ENCODE measurements at regions of chr13 and their contacts with region 1.

Region 1: DNA sequence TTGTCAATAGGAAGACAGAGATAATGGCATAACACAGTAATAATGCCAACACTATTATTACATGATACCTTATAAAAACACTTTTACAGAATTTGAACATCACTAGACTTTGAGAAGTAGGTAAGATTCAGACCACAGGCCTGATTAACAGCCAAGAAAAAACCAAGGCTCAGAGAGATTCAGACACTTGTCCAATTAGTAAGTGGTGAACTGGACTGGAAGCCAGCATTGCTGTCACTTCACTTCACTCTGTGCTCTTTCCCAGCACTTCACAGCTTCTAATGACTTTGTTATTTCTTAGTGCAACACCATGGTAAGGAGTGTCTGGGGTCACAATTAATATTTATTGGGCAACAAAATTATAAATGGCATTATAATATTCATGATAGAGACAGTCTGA is 91.9 kb downstream of the TRPC4 start:
- DNase-seq: no peak
- ATAC-seq: no peak
- H3K4me3 ChIP-seq: no peak overlapping the region
- H3K4me3 Mint-ChIP-seq: no peak overlapping the region
- H3K27ac ChIP-seq: no peak overlapping the region
- H3K27ac Mint-ChIP-seq: no peak overlapping the region
- H3K4me1 ChIP-seq: no peaks in the 10 kb centered on the region
- H3K4me1 Mint-ChIP-seq: no peaks in the 10 kb centered on the region
- H3K27me3 ChIP-seq: no peaks in the 10 kb centered on the region
- H3K27me3 Mint-ChIP-seq: no peaks in the 10 kb centered on the region

Region 2: DNA sequence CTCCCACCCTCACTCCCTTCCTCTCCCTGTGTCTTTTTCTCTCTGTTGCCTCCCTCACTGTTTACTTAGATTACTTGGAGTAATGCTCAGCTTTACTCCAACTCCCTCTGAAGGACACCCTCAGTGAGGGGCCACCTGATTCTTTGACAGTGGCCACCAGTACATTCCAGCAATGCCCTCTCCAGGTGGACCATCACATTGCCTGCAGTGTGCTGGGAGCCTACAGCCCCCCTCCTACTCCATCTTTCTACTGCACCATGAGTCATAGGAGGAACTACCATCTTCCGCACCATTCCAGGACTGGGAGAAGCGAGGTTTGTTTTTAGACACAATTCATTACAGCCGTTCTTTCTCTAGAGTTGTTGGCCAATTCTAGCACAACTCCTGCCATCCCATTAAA is 82.5 kb before region 1 on chr13:
- CTCF ChIA-PET with region 1: no interaction called
- POLR2A ChIA-PET with region 1: no interaction called
- DNase-seq: no peak
- ATAC-seq: no peak
- H3K4me3 ChIP-seq: no peak overlapping the region
- H3K4me3 Mint-ChIP-seq: no peak overlapping the region
- H3K27ac ChIP-seq: no peak overlapping the region
- H3K27ac Mint-ChIP-seq: no peak overlapping the region
- H3K4me1 ChIP-seq: no peaks in the 10 kb centered on the region
- H3K4me1 Mint-ChIP-seq: no peaks in the 10 kb centered on the region
- H3K27me3 ChIP-seq: no peaks in the 10 kb centered on the region
- H3K27me3 Mint-ChIP-seq: no peaks in the 10 kb centered on the region

Region 3: DNA sequence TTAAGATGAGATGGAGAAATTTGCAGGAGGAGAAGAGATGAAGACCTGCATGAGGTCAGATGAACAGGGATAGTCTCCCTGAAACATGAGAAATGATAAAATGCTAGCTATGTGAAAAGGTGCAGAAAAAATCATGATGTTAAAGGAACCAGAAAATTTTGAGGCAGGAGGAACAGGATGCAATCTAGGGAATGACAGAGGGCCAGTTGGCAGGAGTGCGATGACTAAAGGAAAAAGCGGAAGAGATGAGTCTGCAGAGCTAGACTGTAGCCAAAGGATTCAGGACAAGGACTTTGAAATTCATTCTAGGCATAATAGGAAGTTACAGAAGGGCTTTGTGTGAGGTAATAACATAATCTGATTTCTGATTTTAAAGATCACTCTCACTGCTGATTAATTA is 14.0 kb after region 1 on chr13:
- CTCF ChIA-PET with region 1: interaction called in 1 of 2 experiments, 10 read pairs
- POLR2A ChIA-PET with region 1: no interaction called
- DNase-seq: no peak
- ATAC-seq: no peak
- H3K4me3 ChIP-seq: no peak overlapping the region
- H3K4me3 Mint-ChIP-seq: no peak overlapping the region
- H3K27ac ChIP-seq: no peak overlapping the region
- H3K27ac Mint-ChIP-seq: no peak overlapping the region
- H3K4me1 ChIP-seq: no peaks in the 10 kb centered on the region
- H3K4me1 Mint-ChIP-seq: no peaks in the 10 kb centered on the region
- H3K27me3 ChIP-seq: no peaks in the 10 kb centered on the region
- H3K27me3 Mint-ChIP-seq: no peaks in the 10 kb centered on the region

Measured in T-cell (primary cell).